Heart right ventricle (tissue), 16 donors: ENCODE measurements at regions of chr9 and their contacts with region 1.

Region 1: DNA sequence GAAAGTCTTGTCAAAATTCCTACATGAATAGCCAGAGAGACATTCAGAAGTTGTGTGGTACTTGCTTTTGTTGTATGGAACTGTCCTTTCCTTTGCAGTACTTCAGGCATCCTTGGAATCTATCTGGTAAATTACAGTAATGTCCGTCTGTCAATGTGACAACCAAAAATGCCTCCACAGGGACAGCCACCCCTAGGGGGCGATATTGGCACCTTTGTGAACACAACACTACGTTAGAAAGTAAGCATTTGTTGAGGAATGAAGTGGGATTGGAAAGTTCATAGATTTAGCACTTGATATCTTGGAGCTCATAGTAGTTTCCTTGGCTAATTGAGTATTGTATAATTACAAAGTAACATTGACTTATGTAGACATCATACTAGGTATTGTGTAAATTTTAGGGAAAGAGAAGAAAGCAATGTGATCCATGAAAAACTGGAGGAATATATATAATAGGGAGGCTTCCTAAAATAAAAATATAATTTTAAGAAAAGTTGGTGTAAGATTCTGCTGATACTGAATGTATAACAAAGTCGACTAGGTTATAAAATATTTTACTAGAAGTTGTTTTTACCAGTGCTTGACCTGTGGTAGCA is 32.7 kb downstream of the TMEFF1 start:
- DNase-seq: peak; percentile 57 to 58
- ATAC-seq: no peak
- H3K4me3 ChIP-seq: no peak overlapping the region
- H3K27ac ChIP-seq: no peak overlapping the region
- H3K4me1 ChIP-seq: peaks cover 0 to 5% (median 0%) of the 10 kb centered on the region in 9 donors
- H3K27me3 ChIP-seq: no peaks in the 10 kb centered on the region
- CTCF ChIP-seq: peak; percentile 46 to 75 (median 72)

Region 2: DNA sequence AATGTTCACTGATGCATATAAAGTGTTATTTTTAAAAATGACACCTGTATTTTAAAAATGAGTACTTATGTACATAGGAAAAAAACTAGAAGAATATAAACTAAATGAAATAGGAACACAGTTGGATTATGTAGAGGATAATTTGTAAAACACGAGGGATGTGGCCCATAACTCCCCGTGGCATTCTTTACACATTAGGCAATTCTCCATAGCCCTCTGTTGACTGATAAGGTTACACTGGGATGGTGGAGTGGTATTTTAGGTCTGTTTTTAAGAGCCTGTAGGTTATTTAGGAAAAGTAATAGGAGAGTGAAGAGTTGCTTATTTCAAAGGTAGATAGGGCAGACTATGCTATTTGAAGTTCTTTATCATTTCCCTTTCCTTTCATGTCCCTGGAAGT is 74.0 kb after region 1 on chr9:
- intact Hi-C with region 1: loop called in 1 of 10 experiments (anchors 5 kb)
- DNase-seq: no peak
- ATAC-seq: peak in 6 of 8 donors; percentile 36 to 69 (median 62)
- H3K4me3 ChIP-seq: peak overlapping the region in 9 of 10 donors; percentile 23 to 57 (median 49)
- H3K27ac ChIP-seq: peak overlapping the region in 7 of 10 donors; percentile 58 to 77 (median 73)
- H3K4me1 ChIP-seq: peaks cover 0 to 22% (median 0%) of the 10 kb centered on the region in 9 donors
- H3K27me3 ChIP-seq: no peaks in the 10 kb centered on the region
- CTCF ChIP-seq: no peak

Region 3: DNA sequence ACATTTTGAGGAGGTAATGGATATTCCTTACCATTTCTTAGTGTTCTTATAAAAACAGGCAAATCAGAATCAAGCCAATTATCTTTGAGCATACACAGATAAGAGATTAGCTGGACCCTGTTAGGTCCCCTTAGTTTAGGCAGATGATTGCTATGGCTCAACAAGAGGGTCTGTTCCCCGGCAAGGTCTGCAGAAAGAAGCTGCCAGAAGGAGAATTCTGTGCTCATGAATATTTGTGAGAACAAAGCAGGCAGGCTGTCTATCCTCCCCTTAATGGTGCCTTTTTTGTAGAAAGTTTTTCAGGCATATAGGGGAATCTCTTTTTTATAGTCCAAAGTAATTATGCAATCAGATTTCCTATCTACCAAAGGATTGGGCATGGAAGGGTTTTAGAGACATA is 99.7 kb after region 1 on chr9:
- intact Hi-C with region 1: no loop called
- DNase-seq: no peak
- ATAC-seq: no peak
- H3K4me3 ChIP-seq: no peak overlapping the region
- H3K27ac ChIP-seq: no peak overlapping the region
- H3K4me1 ChIP-seq: no peaks in the 10 kb centered on the region
- H3K27me3 ChIP-seq: no peaks in the 10 kb centered on the region
- CTCF ChIP-seq: no peak